PC-9 (cell line): ENCODE measurements at regions of chr12 and their contacts with region 1.

Region 1: DNA sequence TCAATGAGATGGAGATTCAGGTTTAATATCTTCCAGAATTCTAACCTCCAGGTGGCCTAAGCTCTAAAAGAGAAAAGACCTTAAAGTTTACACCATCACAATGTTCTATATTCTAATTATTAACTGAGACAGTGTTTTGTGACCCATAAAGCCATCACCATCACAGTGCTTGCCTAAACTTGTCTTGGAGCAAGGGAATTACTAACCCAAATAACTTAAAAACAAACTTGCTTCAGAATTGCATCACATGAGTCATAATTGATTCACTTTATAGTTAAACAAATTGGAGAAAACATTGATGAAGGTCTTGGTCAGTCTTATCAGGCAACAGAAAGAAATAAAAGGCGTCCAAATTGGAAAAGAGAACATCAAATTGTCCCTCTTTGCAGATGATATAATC is 54.5 kb upstream of the ALG10 start:
- DNase-seq: no peak
- H3K4me3 ChIP-seq: no peak overlapping the region
- H3K27ac ChIP-seq: no peak overlapping the region
- H3K4me1 ChIP-seq: no peaks in the 10 kb centered on the region
- H3K27me3 ChIP-seq: no peaks in the 10 kb centered on the region
- CTCF ChIP-seq: no peak

Region 2: GRCh38 chr12:33277386-33277785 is 690.4 kb before region 1 on chr12:
- CTCF ChIA-PET with region 1: no interaction called
- POLR2A ChIA-PET with region 1: no interaction called
- intact Hi-C with region 1: no loop called
- DNase-seq: no peak
- H3K4me3 ChIP-seq: no peak overlapping the region
- H3K27ac ChIP-seq: no peak overlapping the region
- H3K4me1 ChIP-seq: no peaks in the 10 kb centered on the region
- H3K27me3 ChIP-seq: no peaks in the 10 kb centered on the region
- CTCF ChIP-seq: no peak

Region 3: DNA sequence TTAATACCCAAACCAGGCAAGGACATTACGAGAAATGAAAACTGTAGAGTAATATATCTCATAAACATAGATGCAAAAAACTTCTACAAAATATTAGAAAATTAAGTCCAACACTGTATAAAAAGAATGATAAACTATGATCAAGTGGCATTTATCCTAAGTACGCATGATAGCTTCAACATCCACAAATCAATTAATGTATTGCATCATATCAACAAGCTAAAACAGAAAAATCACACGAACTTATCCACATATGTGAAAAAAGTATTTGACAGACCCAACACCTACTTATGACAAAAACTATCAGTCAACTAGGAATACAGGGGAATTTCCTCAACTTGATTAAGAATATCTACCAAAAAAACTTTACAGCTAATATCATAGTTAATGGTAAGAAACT is 75.3 kb before region 1 on chr12:
- CTCF ChIA-PET with region 1: no interaction called
- POLR2A ChIA-PET with region 1: no interaction called
- intact Hi-C with region 1: loop called (anchors 5 kb)
- DNase-seq: no peak
- H3K4me3 ChIP-seq: no peak overlapping the region
- H3K27ac ChIP-seq: no peak overlapping the region
- H3K4me1 ChIP-seq: no peaks in the 10 kb centered on the region
- H3K27me3 ChIP-seq: no peaks in the 10 kb centered on the region
- CTCF ChIP-seq: no peak